A673 (cell line): ENCODE measurements at regions of chr15 and their contacts with region 1.

Region 1: GRCh38 chr15:94119923-94120775 is 111.2 kb upstream of the MCTP2 start:
- DNase-seq: peak; percentile 91
- H3K4me3 ChIP-seq: no peak overlapping the region
- H3K27ac ChIP-seq: no peak overlapping the region
- H3K4me1 ChIP-seq: peaks cover 20% of the 10 kb centered on the region
- H3K27me3 ChIP-seq: no peaks in the 10 kb centered on the region
- CTCF ChIP-seq: peak; percentile 99

Region 2: DNA sequence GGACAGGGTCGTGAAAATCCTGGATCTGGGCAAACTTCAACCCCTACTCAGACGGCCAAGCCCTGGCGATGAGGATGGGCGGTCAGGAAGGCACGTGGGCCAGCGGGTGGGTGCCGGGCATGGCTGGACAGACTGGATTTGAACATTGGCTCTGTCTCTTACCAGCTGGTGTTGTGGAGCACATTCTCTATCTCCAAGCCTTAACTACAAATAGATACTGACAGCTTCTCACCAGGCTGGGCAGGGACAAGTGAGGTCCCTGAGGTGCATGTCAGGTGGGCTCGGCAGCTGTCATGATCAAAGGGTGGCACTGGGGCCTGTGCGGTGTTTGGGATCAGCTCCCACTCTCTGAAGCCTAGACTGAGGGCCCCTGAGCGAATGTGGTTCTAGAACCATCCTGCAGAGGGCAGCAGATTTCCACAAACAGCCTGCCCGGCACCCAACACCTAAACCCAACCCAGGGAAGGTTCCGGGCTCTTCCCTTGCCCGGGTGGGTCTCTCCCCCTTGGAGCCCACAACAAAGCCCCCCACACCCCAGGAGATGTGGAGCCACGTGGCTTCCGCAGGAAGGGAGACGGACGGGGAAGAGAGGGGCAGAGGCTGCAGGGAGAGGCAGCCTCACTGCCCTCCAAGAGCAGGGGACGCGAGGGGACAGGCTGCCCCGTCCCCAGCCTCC is 1089.6 kb before region 1 on chr15:
- CTCF ChIA-PET with region 1: interaction called, 24 read pairs
- POLR2A ChIA-PET with region 1: no interaction called
- intact Hi-C with region 1: loop called (anchors 2 kb)
- DNase-seq: peak; percentile 79
- H3K4me3 ChIP-seq: no peak overlapping the region
- H3K27ac ChIP-seq: no peak overlapping the region
- H3K4me1 ChIP-seq: peaks cover 37% of the 10 kb centered on the region
- H3K27me3 ChIP-seq: no peaks in the 10 kb centered on the region
- CTCF ChIP-seq: peak; percentile 90

Region 3: DNA sequence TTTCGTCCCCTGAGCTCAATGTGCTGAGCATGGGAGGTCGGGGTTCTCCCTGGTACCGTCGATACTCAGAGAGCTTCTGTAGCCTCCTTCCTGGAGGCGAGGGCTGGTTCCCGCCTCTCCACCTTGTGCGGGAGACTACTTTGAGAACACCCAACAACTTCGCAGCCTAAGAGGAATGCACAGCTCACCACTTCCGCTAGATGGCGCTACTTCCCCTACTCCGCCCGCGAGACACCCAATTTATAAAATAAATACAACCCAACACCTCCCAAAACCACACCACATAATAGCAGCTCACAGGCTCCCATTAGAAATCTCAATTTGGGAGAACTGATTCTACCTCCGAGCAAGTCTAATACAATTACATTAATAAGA is 1032.3 kb before region 1 on chr15:
- CTCF ChIA-PET with region 1: interaction called, 39 read pairs
- POLR2A ChIA-PET with region 1: no interaction called
- intact Hi-C with region 1: loop called (anchors 1 kb)
- DNase-seq: peak; percentile 83
- H3K4me3 ChIP-seq: peak overlapping the region; percentile 47
- H3K27ac ChIP-seq: no peak overlapping the region
- H3K4me1 ChIP-seq: peaks cover 10% of the 10 kb centered on the region
- H3K27me3 ChIP-seq: peaks cover 57% of the 10 kb centered on the region
- CTCF ChIP-seq: peak; percentile 92

Region 4: GRCh38 chr15:93826790-93827189 is 293.4 kb before region 1 on chr15:
- CTCF ChIA-PET with region 1: interaction called, 5 read pairs
- POLR2A ChIA-PET with region 1: no interaction called
- intact Hi-C with region 1: loop called (anchors 10 kb)
- DNase-seq: no peak
- H3K4me3 ChIP-seq: no peak overlapping the region
- H3K27ac ChIP-seq: no peak overlapping the region
- H3K4me1 ChIP-seq: peaks cover 7% of the 10 kb centered on the region
- H3K27me3 ChIP-seq: no peaks in the 10 kb centered on the region
- CTCF ChIP-seq: no peak

Region 5: GRCh38 chr15:93974804-93975481 is 145.2 kb before region 1 on chr15:
- CTCF ChIA-PET with region 1: interaction called, 12 read pairs
- POLR2A ChIA-PET with region 1: no interaction called
- intact Hi-C with region 1: no loop called
- DNase-seq: peak; percentile 58
- H3K4me3 ChIP-seq: no peak overlapping the region
- H3K27ac ChIP-seq: no peak overlapping the region
- H3K4me1 ChIP-seq: no peaks in the 10 kb centered on the region
- H3K27me3 ChIP-seq: no peaks in the 10 kb centered on the region
- CTCF ChIP-seq: peak; percentile 68

Region 6: GRCh38 chr15:93997084-93997918 is 122.8 kb before region 1 on chr15:
- CTCF ChIA-PET with region 1: interaction called, 50 read pairs
- POLR2A ChIA-PET with region 1: no interaction called
- intact Hi-C with region 1: loop called (anchors 1 kb)
- DNase-seq: peak; percentile 48
- H3K4me3 ChIP-seq: no peak overlapping the region
- H3K27ac ChIP-seq: no peak overlapping the region
- H3K4me1 ChIP-seq: no peaks in the 10 kb centered on the region
- H3K27me3 ChIP-seq: no peaks in the 10 kb centered on the region
- CTCF ChIP-seq: peak; percentile 84

Region 7: GRCh38 chr15:94083467-94084052 is 36.6 kb before region 1 on chr15:
- CTCF ChIA-PET with region 1: interaction called, 18 read pairs
- POLR2A ChIA-PET with region 1: no interaction called
- intact Hi-C with region 1: no loop called
- DNase-seq: peak; percentile 99
- H3K4me3 ChIP-seq: no peak overlapping the region
- H3K27ac ChIP-seq: peak overlapping the region; percentile 84
- H3K4me1 ChIP-seq: peaks cover 73% of the 10 kb centered on the region
- H3K27me3 ChIP-seq: no peaks in the 10 kb centered on the region
- CTCF ChIP-seq: no peak